PC-3 (cell line): ENCODE measurements at regions of chr14 and their contacts with region 1.

Region 1: DNA sequence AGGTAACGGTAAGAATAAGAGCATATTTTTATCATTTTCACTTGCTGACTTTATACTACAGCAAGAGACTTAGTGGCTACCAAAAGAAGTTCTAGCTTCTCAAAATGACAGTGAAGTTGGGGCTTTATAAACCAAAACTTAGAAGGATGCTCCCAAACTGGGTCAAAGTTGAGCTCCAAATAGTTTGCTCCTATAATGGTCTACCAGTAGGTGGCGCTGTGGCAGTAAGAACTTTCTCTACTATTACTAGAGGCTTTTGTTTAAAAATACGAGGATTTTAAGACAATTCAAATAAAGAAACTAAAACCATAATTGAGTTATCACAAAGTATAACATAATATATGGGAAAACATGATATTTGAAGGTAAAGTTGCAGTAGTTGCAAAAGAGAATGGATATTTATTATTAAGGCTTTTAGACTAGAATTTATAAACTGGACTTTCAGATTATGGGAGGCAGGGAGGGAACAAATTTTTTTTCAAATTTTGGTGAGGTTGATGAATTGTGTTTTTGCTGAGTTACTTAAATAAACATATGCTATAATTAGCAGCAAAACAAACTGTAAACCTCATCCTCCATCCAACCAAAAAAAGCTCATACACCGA is 75.0 kb downstream of the TGFB3 start:
- DNase-seq: peak; percentile 72
- ATAC-seq: no peak
- H3K4me3 ChIP-seq: no peak overlapping the region
- H3K27ac ChIP-seq: no peak overlapping the region
- H3K4me1 ChIP-seq: peaks cover 9% of the 10 kb centered on the region; the same call in 1 of the 2 replicates
- H3K27me3 ChIP-seq: no peaks in the 10 kb centered on the region
- CTCF ChIP-seq: peak; percentile 96

Region 2: DNA sequence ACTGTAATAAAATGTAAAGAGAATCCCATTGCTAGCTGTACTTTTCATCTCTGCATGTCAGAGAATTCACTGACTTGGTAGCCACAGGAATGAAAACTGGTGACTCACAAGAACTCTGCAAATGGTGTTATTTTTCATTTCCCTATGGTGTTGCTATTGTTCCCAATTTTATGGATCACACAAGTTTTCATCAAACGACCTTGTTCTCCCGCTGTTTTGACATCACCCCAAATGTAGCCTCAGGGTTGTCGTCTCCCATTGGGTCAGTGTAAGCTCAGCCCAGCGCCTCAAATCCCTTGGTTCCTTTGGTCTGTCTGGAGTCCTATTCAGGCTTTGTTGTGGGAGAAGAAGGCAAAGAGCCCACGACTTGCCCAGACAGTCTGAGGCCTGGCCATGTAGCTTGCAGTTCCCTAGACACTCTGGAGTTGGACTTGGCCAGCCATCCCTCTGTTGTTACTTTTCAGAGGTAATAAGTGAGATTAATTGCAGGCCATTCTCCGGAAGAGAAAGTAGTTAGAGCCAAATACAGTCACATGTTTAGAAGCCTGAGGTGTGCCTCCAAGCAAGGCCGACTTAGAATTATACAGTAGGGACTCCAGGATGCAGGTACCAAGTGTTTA is 84.1 kb before region 1 on chr14:
- CTCF ChIA-PET with region 1: interaction called, 17 read pairs
- POLR2A ChIA-PET with region 1: no interaction called
- intact Hi-C with region 1: no loop called
- DNase-seq: peak; percentile 81
- ATAC-seq: peak; percentile 80
- H3K4me3 ChIP-seq: no peak overlapping the region; the same call in 1 of the 2 replicates
- H3K27ac ChIP-seq: peak overlapping the region; percentile 97
- H3K4me1 ChIP-seq: peaks cover 52% of the 10 kb centered on the region
- H3K27me3 ChIP-seq: no peaks in the 10 kb centered on the region
- CTCF ChIP-seq: no peak